ENCODE measurements at regions of chr18 and their contacts with region 1.

Region 1: DNA sequence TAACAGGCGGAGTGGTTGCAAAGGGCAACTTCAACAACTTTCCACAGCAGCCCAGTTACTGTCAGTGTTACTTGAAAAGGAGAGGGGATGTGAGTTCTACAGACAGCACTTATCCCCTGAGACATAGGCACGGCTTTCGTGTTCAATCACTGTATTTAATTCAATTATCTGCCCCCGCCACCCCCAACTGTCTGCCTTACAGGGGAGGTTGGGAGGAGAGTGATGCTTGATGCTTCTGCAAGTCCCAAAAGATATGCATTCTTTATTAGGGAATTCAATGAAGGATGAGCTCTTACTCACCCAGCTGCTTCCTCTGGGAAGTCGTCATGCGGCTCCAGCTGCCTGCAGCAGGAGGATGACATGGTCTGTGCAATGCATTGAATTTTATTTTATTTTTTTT is 639.9 kb downstream of the DCC start:
- DNase-seq: no peak

Region 2: GRCh38 chr18:52937840-52938239 is 42.1 kb before region 1 on chr18:
- intact Hi-C with region 1: no loop called
- DNase-seq: no peak

Region 3: DNA sequence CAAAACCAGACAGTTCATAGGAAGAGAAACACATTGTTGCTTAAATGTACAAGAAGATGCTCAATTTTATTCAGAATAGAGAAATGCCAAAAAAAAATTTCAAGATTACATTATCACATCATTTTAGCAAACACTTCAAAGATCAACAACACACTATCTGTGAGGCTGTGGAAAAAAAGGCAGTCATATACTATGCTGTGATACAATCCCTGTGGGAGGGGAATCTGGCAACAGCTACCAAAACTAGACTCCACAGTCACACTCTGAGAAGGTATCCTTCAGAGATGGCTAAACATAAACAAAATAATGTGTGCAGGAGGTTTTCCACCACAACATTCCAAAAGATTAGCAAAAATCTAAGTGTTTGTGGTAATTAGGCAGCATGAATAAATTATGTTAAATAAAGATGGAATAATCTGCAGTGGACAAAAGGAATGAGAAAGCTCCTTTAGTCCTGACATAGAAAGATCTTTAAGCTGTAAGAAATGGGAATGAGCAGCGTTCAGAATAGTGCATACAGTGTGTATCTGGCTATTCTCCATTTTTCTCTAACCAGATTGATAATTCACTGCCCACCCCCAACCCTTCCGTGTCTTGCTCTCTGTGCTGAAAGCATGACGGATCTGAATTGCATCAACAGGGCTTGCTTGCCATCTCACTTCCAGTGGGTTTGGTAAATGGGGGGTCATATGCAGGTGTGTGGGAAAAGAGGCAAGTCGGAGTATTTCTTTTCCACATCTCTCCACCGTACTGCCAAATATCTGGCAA is 915.0 kb after region 1 on chr18:
- intact Hi-C with region 1: loop called in 1 of 2 experiments (anchors 5 kb)
- DNase-seq: no peak

Measured in posterior vena cava (tissue), 2 donors.